CD8-positive, alpha-beta T cell (primary cell): ENCODE measurements at regions of chr21 and their contacts with region 1.

Region 1: GRCh38 chr21:41068967-41069642 is 98.9 kb upstream of the BACE2 start:
- DNase-seq: peak; percentile 23 to 69 (median 53)
- ATAC-seq: peak; percentile 64
- H3K4me3 ChIP-seq: peak overlapping the region; percentile 11 to 16
- H3K4me3 Mint-ChIP-seq: peak overlapping the region; percentile 79
- H3K27ac ChIP-seq: no peak overlapping the region
- H3K27ac Mint-ChIP-seq: no peak overlapping the region
- H3K4me1 ChIP-seq: peaks cover 4% of the 10 kb centered on the region
- H3K4me1 Mint-ChIP-seq: peaks cover 12% of the 10 kb centered on the region
- H3K27me3 ChIP-seq: peaks cover 4 to 7% of the 10 kb centered on the region in 2 experiments
- H3K27me3 Mint-ChIP-seq: peaks cover 35% of the 10 kb centered on the region
- CTCF ChIP-seq: peak; percentile 53

Region 2: DNA sequence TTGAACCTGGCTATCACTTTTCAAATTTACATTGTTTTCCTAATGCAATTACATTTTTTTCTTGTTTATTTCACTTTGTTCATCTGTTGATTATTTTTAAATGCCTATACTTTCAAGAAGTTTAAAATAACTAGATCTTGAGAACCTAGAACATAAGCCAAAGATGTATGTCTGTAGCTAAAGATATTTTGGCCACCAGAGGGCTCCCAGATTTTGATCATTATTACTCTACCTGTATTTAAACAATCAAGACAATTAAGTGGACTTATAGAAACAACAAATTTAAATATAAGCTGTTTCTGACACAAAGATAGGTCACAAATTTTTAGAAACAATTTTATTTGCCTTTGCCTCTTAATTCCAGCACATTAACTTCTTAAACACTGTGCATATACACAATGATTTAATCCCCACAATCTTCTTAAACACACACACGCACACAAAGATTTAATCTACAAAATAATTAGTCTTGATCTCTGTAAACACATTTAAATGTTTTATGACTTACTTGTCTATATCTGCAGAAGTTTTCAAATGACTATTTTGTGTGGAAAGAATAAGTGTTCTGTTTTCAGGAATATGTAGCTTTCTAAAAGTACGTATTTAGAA is 602.1 kb before region 1 on chr21:
- CTCF ChIA-PET with region 1: no interaction called
- POLR2A ChIA-PET with region 1: no interaction called
- intact Hi-C with region 1: loop called in 1 of 2 experiments (anchors 5 kb)
- DNase-seq: no peak
- ATAC-seq: no peak
- H3K4me3 ChIP-seq: no peak overlapping the region
- H3K4me3 Mint-ChIP-seq: no peak overlapping the region
- H3K27ac ChIP-seq: no peak overlapping the region
- H3K27ac Mint-ChIP-seq: no peak overlapping the region
- H3K4me1 ChIP-seq: no peaks in the 10 kb centered on the region
- H3K4me1 Mint-ChIP-seq: no peaks in the 10 kb centered on the region
- H3K27me3 ChIP-seq: no peaks in the 10 kb centered on the region
- H3K27me3 Mint-ChIP-seq: no peaks in the 10 kb centered on the region
- CTCF ChIP-seq: no peak

Region 3: DNA sequence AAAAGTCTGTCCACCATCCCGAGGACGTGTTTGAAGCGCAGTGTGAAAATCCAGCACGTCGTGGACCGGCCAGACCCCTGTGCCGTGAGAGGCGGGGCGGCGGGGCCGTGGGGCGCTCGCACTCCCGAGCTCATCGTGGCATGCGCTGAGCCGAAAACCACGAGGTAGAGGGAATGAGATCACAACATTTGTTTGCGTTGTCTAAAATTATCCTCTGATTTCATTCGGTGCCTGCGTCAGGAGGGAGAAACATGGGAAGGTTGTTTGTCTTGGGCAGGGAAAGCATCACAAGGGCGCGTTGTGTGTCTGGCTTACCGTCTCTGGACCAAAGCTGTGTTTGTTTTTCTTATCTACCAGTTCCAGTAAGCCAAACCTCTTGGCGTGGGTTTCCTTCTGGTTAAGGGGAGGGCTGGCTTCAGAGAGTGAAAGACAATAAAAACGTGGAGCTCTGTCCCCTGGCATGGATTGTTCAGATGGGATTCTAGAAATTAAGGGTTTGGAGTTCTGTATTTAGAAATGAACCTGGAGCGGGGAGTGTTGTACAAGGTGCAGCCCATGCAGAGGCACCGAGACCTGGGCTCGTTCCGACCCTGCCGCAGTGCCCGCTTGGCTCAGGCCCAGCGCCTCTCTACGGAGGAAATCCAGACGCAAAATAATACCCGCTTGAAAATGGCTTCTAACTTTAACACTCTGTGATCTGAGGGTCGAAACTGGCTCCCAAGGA is 178.6 kb after region 1 on chr21:
- CTCF ChIA-PET with region 1: no interaction called
- POLR2A ChIA-PET with region 1: no interaction called
- intact Hi-C with region 1: no loop called
- DNase-seq: no peak
- ATAC-seq: no peak
- H3K4me3 ChIP-seq: no peak overlapping the region
- H3K4me3 Mint-ChIP-seq: no peak overlapping the region
- H3K27ac ChIP-seq: no peak overlapping the region
- H3K27ac Mint-ChIP-seq: no peak overlapping the region
- H3K4me1 ChIP-seq: no peaks in the 10 kb centered on the region
- H3K4me1 Mint-ChIP-seq: no peaks in the 10 kb centered on the region
- H3K27me3 ChIP-seq: no peaks in the 10 kb centered on the region
- H3K27me3 Mint-ChIP-seq: peaks cover 13% of the 10 kb centered on the region
- CTCF ChIP-seq: no peak